CD4-positive, alpha-beta memory T cell (primary cell): ENCODE measurements at regions of chr19 and their contacts with region 1.

Region 1: DNA sequence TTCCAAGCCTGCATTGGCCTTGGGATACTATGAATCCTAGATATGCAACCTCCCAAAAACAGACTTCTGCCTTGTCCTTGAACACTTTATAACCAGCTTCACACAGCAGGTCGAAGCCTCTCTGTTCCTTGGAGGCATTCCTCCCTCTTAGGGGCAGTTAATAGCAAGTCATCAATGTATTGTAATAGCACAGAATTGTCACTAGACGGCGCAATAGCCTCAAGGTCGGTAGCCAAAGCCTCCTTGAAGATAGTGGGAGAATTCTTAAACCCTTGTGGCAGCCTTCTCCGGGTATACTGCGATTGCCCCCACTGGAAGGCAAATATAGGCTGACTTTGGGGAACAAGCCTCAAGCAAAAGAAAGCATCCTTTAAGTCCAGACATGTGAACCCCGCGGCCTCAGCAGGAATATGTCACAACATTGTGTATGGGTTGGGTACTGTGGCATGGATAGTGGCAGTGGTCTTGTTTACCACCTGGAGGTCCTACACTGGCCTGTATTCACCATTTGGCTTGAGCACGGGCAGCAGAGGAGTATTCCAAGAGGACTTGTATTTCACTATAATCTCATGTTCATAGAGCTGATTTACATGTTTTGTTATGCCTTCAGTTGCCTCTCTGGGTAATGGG is 61.1 kb downstream of the ZNF431 start:
- DNase-seq: peak; percentile 32 to 46 (median 40)
- H3K4me3 ChIP-seq: no peak overlapping the region
- H3K4me3 Mint-ChIP-seq: no peak overlapping the region
- H3K27ac ChIP-seq: no peak overlapping the region
- H3K27ac Mint-ChIP-seq: no peak overlapping the region
- H3K4me1 ChIP-seq: no peaks in the 10 kb centered on the region
- H3K4me1 Mint-ChIP-seq: no peaks in the 10 kb centered on the region
- H3K27me3 ChIP-seq: no peaks in the 10 kb centered on the region
- H3K27me3 Mint-ChIP-seq: peaks cover 6 to 17% of the 10 kb centered on the region in 2 donors

Region 2: DNA sequence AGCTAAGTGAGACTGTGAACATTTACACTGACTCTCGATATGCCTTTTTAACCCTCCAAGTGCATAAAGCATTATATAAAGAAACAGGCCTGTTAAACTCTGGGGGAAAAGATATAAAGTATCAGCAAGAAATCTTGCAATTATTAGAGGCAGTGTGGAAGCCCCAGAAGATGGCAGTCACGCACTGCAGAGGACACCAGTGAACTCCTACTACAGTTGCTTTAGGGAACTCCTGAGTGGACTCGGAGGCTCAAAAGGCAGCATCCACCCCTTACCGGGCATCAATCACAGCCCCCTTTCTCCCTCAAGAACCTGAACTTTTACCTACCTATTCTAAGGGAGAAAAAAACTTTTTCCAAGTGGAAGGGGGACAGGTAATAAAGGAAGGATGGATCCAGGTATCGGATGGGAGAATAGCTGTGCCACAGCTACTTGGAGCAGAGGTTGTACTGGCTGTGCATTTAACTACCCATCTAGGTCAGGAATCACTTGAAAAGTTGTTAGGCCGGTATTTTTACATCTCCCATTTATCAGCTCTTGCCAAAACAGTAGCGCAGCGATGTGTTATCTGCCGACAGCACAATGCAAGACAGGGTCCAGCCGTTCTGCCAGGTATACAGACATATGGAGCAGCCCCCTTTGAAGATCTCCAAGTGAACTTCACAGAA is 955.8 kb before region 1 on chr19:
- CTCF ChIA-PET with region 1: interaction called, 3 read pairs
- POLR2A ChIA-PET with region 1: no interaction called
- intact Hi-C with region 1: loop called (anchors 1 kb)
- DNase-seq: peak in 4 of 5 donors; percentile 21 to 43 (median 34)
- H3K4me3 ChIP-seq: no peak overlapping the region
- H3K4me3 Mint-ChIP-seq: no peak overlapping the region
- H3K27ac ChIP-seq: no peak overlapping the region
- H3K27ac Mint-ChIP-seq: no peak overlapping the region
- H3K4me1 ChIP-seq: peaks cover 3% of the 10 kb centered on the region
- H3K4me1 Mint-ChIP-seq: peaks cover 2 to 11% (median 9%) of the 10 kb centered on the region in 4 donors
- H3K27me3 ChIP-seq: no peaks in the 10 kb centered on the region
- H3K27me3 Mint-ChIP-seq: no peaks in the 10 kb centered on the region

Region 3: DNA sequence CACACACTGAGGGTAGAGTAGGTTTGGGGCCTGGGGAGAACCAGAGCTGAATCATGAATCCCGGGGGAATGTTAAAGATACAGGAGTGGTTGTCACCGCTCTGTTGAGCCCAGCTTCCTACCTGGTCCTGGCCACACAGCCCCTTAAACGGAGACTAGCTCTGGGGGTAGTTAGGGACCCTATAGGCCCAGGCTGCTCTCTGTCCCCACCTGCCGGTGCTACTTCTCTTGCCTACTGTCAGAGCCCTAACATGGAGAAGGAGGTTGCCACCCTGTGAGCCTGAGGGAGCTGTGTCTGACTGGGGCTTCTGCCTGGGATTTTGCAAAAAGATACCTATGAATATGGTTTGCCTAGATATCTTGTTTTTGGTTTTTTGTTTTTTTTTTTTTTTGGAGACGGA is 265.8 kb after region 1 on chr19:
- CTCF ChIA-PET with region 1: no interaction called
- POLR2A ChIA-PET with region 1: no interaction called
- intact Hi-C with region 1: loop called (anchors 5 kb)
- DNase-seq: no peak
- H3K4me3 ChIP-seq: no peak overlapping the region
- H3K4me3 Mint-ChIP-seq: no peak overlapping the region
- H3K27ac ChIP-seq: no peak overlapping the region
- H3K27ac Mint-ChIP-seq: no peak overlapping the region
- H3K4me1 ChIP-seq: no peaks in the 10 kb centered on the region
- H3K4me1 Mint-ChIP-seq: peaks cover 0 to 2% (median under 1%) of the 10 kb centered on the region in 4 donors
- H3K27me3 ChIP-seq: no peaks in the 10 kb centered on the region
- H3K27me3 Mint-ChIP-seq: peaks cover 0 to 2% of the 10 kb centered on the region in 2 donors

Region 4: DNA sequence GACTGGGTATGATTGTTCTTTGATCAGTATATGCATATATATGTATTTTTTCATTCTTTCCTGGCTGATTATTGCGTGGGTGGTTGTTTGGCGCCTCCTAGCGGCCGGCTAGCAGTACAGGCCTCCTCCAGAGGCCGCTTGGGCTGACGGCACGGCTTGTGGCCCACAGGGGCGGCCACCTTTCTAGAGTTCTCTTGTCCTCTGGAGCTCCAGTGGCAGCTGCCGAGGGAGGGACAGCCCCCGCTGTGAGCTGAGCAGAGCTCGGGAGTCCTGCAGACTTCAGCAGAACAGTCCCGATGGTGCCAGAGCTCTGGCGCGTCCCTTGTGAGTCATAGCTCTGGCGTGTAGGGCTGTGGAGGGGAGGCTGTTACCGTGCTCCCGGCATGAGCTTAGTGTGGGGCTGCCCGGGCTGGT is 279.9 kb after region 1 on chr19:
- CTCF ChIA-PET with region 1: interaction called, 37 read pairs
- POLR2A ChIA-PET with region 1: no interaction called
- intact Hi-C with region 1: no loop called
- DNase-seq: peak; percentile 56 to 73 (median 66)
- H3K4me3 ChIP-seq: no peak overlapping the region
- H3K4me3 Mint-ChIP-seq: peak overlapping the region in 2 of 8 donors; percentile 6 to 57
- H3K27ac ChIP-seq: no peak overlapping the region
- H3K27ac Mint-ChIP-seq: no peak overlapping the region
- H3K4me1 ChIP-seq: no peaks in the 10 kb centered on the region
- H3K4me1 Mint-ChIP-seq: peaks cover 0 to 2% (median 0%) of the 10 kb centered on the region in 4 donors
- H3K27me3 ChIP-seq: no peaks in the 10 kb centered on the region
- H3K27me3 Mint-ChIP-seq: no peaks in the 10 kb centered on the region

Region 5: GRCh38 chr19:21891081-21891480 is 688.1 kb after region 1 on chr19:
- CTCF ChIA-PET with region 1: no interaction called
- POLR2A ChIA-PET with region 1: no interaction called
- intact Hi-C with region 1: loop called (anchors 1 kb)
- DNase-seq: no peak
- H3K4me3 ChIP-seq: no peak overlapping the region
- H3K4me3 Mint-ChIP-seq: no peak overlapping the region
- H3K27ac ChIP-seq: no peak overlapping the region
- H3K27ac Mint-ChIP-seq: no peak overlapping the region
- H3K4me1 ChIP-seq: no peaks in the 10 kb centered on the region
- H3K4me1 Mint-ChIP-seq: peaks cover 0 to 2% (median 0%) of the 10 kb centered on the region in 4 donors
- H3K27me3 ChIP-seq: no peaks in the 10 kb centered on the region
- H3K27me3 Mint-ChIP-seq: peaks cover 0 to under 1% of the 10 kb centered on the region in 2 donors